Activated naive CD4-positive, alpha-beta T cell treated with anti-CD3 and anti-CD28 coated beads for 36 hours (primary cell): ENCODE measurements at regions of chr4 and their contacts with region 1.

Region 1: DNA sequence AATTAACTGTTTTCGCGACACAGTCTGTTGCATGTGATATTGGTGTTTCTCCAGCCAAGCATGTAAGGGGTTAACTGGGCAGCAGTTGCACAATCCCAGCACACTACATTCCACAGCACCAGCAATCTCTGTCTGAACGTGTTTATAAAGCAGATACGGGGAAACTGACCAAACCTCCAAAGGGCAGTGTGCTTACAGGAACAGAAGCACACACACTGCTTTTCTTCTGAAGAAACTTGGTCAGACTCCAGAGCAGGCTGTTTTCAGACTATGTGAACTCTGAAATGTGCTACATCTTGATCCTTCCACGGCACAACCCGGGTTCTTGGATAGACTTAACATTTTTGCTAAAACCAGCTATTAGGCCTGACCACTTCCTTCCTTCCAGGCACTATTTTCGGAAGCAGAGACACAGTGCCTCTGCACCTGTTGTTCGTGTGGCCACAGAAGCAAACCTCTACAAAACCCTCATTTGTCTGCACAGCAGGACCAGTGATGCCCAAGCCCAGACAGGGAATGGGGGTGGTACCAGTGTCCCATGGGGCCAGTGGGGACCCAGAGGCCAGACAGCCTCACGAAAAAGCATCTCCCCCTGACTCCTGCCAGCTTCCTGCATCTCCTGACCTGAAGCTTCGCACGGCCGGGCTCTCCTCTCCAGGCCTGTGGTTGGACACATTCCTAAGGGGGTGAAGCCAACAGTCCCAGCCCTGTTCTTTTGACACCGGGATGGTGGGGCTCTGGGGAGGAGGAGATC is 90.1 kb downstream of the IRF2 start:
- DNase-seq: peak; percentile 38
- H3K4me3 Mint-ChIP-seq: no peak overlapping the region
- H3K27ac Mint-ChIP-seq: no peak overlapping the region
- H3K4me1 Mint-ChIP-seq: peaks cover 61% of the 10 kb centered on the region
- H3K27me3 Mint-ChIP-seq: no peaks in the 10 kb centered on the region

Region 2: GRCh38 chr4:184408021-184408710 is 23.9 kb after region 1 on chr4:
- CTCF ChIA-PET with region 1: no interaction called
- intact Hi-C with region 1: loop called (anchors 2 kb)
- DNase-seq: no peak
- H3K4me3 Mint-ChIP-seq: no peak overlapping the region
- H3K27ac Mint-ChIP-seq: no peak overlapping the region
- H3K4me1 Mint-ChIP-seq: peaks cover 46% of the 10 kb centered on the region
- H3K27me3 Mint-ChIP-seq: no peaks in the 10 kb centered on the region